PC-9 (cell line): ENCODE measurements at regions of chr7 and their contacts with region 1.

Region 1: DNA sequence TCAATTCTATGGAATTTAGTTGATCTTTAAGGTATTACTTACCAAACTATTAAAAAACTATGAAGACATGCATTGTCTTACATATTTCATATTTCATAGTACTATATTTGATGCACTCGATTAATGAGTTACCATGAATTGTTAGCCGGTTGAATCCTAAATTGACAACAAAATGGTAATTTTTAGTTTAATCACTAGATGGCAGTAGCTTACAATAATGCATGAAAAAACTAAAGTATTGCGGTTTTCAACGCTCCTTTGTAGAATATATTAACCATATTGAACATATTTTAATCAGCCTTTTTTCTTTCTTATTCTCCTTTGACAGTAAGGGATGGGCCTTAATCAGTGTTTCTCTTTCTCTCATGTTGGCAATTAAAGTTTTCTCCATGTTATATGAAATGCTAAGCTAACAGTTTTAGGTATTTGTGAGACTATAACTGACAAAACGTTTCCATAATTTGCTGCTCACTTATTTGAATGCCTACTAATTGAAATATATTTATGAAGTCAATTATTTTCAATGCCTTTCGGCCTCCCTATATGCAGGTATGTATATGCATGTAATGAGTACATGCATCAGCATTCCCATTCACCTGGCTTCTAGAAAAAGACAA is 48.5 kb upstream of the ARL4A start:
- DNase-seq: peak in 1 of 2 experiments; percentile 47
- H3K4me3 ChIP-seq: no peak overlapping the region
- H3K27ac ChIP-seq: no peak overlapping the region
- H3K4me1 ChIP-seq: no peaks in the 10 kb centered on the region
- H3K27me3 ChIP-seq: no peaks in the 10 kb centered on the region
- CTCF ChIP-seq: peak; percentile 88

Region 2: GRCh38 chr7:12609561-12609960 is 29.4 kb before region 1 on chr7:
- CTCF ChIA-PET with region 1: no interaction called
- POLR2A ChIA-PET with region 1: no interaction called
- intact Hi-C with region 1: no loop called
- DNase-seq: no peak
- H3K4me3 ChIP-seq: no peak overlapping the region
- H3K27ac ChIP-seq: no peak overlapping the region
- H3K4me1 ChIP-seq: no peaks in the 10 kb centered on the region
- H3K27me3 ChIP-seq: no peaks in the 10 kb centered on the region
- CTCF ChIP-seq: no peak

Region 3: GRCh38 chr7:13117103-13117502 is 478.1 kb after region 1 on chr7:
- CTCF ChIA-PET with region 1: no interaction called
- POLR2A ChIA-PET with region 1: no interaction called
- intact Hi-C with region 1: loop called (anchors 2 kb)
- DNase-seq: no peak
- H3K4me3 ChIP-seq: no peak overlapping the region
- H3K27ac ChIP-seq: no peak overlapping the region
- H3K4me1 ChIP-seq: no peaks in the 10 kb centered on the region
- H3K27me3 ChIP-seq: no peaks in the 10 kb centered on the region
- CTCF ChIP-seq: peak; percentile 62

Region 4: GRCh38 chr7:13262929-13263530 is 624.1 kb after region 1 on chr7:
- CTCF ChIA-PET with region 1: interaction called, 6 read pairs
- POLR2A ChIA-PET with region 1: no interaction called
- intact Hi-C with region 1: loop called (anchors 1 kb)
- DNase-seq: no peak
- H3K4me3 ChIP-seq: no peak overlapping the region
- H3K27ac ChIP-seq: no peak overlapping the region
- H3K4me1 ChIP-seq: no peaks in the 10 kb centered on the region
- H3K27me3 ChIP-seq: no peaks in the 10 kb centered on the region
- CTCF ChIP-seq: peak; percentile 82